ENCODE measurements at regions of chrX and their contacts with region 1.

Region 1: GRCh38 chrX:53683556-53684414 is 2.7 kb downstream of the HUWE1 start:
- DNase-seq: peak; percentile 88
- H3K4me3 Mint-ChIP-seq: peak overlapping the region; percentile 91
- H3K27ac Mint-ChIP-seq: peak overlapping the region; percentile 93
- H3K4me1 Mint-ChIP-seq: peaks cover 31% of the 10 kb centered on the region
- H3K27me3 Mint-ChIP-seq: no peaks in the 10 kb centered on the region

Region 2: DNA sequence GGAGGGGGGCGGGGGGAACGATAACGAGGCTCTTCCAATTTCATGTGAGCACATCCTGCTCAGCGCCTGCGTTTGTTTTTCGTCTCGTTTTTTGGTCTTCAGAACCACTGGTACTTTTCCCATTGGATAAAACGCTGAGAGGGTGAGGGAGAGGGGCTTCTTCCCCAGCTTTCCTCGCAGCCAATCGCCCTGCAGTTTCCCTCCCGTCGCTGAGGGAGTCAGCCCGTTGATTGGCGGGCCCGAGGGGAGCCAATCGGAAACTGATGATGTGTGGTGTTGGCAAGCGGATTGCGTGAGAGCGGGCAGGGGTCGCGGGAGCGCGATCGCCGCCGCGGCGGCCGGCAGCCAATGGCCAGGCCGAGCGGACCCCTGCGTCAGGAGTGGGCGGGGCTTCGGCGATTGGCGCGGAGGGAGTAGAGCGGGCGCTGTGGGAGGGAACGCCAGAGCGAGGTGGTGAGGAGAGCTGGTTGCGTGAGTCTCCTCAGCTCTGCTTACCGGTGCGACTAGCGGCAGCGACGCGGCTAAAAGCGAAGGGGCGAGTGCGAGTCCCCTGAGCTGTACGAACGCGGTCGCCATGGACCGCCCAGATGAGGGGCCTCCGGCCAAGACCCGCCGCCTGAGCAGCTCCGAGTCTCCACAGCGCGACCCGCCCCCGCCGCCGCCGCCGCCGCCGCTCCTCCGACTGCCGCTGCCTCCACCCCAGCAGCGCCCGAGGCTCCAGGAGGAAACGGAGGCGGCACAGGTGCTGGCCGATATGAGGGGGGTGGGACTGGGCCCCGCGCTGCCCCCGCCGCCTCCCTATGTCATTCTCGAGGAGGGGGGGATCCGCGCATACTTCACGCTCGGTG is 601.6 kb before region 1 on chrX and contains the start of gene TSPYL2:
- intact Hi-C with region 1: loop called (anchors 5 kb)
- DNase-seq: peak; percentile 89
- H3K4me3 Mint-ChIP-seq: peak within 1 kb of the TSS; percentile 94
- H3K27ac Mint-ChIP-seq: peak within 1 kb of the TSS; percentile 99
- H3K4me1 Mint-ChIP-seq: peaks cover 29% of the 10 kb centered on the region
- H3K27me3 Mint-ChIP-seq: no peaks in the 10 kb centered on the region
- total RNA-seq, gene TSPYL2: 37.5 and 40.3 TPM in 2 replicates

Region 3: DNA sequence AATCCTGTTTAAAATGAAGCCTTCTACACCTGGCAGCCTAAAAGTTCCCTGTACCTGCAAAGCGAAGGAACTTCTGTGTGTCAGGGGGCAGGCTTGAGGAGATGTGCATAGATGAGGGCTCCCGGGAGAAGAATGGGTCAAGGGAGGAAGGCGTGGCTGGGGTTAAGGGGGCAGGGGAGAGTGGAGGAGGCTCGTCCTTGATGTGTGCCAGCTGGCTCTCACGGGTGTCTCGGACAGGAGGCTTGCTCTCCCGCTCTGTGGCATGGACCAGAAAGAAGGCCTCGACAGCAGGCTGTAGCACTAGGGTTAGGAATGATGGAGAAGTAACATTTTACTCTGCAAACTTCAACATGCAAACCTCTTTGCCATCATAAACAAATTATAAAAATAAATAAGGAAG is 145.0 kb before region 1 on chrX:
- intact Hi-C with region 1: no loop called
- DNase-seq: no peak
- H3K4me3 Mint-ChIP-seq: no peak overlapping the region
- H3K27ac Mint-ChIP-seq: no peak overlapping the region
- H3K4me1 Mint-ChIP-seq: no peaks in the 10 kb centered on the region
- H3K27me3 Mint-ChIP-seq: no peaks in the 10 kb centered on the region

Region 4: GRCh38 chrX:53642337-53642736 is 41.4 kb before region 1 on chrX:
- intact Hi-C with region 1: loop called (anchors 5 kb)
- DNase-seq: no peak
- H3K4me3 Mint-ChIP-seq: no peak overlapping the region
- H3K27ac Mint-ChIP-seq: no peak overlapping the region
- H3K4me1 Mint-ChIP-seq: peaks cover 5% of the 10 kb centered on the region
- H3K27me3 Mint-ChIP-seq: no peaks in the 10 kb centered on the region

Region 5: GRCh38 chrX:53669258-53669657 is 14.5 kb before region 1 on chrX:
- intact Hi-C with region 1: no loop called
- DNase-seq: no peak
- H3K4me3 Mint-ChIP-seq: no peak overlapping the region
- H3K27ac Mint-ChIP-seq: no peak overlapping the region
- H3K4me1 Mint-ChIP-seq: peaks cover 22% of the 10 kb centered on the region
- H3K27me3 Mint-ChIP-seq: no peaks in the 10 kb centered on the region

Region 6: DNA sequence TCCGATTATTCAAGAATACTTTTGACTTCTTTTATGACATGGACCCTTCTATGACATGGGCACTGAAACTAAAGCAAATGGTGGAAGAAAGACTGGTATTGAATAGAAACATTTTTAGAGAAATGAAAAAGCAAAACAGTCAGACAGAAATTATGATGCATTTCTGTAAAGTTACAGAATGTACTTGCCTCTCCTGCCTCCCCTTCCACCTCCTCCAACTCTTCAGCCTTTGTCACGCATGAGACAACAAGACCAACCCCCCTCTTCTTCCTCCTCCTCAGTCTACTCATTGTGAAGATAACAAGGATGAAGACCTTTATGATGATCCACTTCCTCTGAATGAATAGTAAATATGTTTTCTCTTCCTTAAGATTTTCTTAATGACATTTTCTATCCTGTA is 49.0 kb after region 1 on chrX:
- intact Hi-C with region 1: loop called (anchors 1 kb)
- DNase-seq: no peak
- H3K4me3 Mint-ChIP-seq: peak overlapping the region; percentile 68
- H3K27ac Mint-ChIP-seq: peak overlapping the region; percentile 88
- H3K4me1 Mint-ChIP-seq: peaks cover 33% of the 10 kb centered on the region
- H3K27me3 Mint-ChIP-seq: no peaks in the 10 kb centered on the region

Region 7: GRCh38 chrX:53831662-53832635 is 148.2 kb after region 1 on chrX:
- intact Hi-C with region 1: loop called (anchors 2 kb)
- DNase-seq: peak; percentile 20
- H3K4me3 Mint-ChIP-seq: peak overlapping the region; percentile 35
- H3K27ac Mint-ChIP-seq: peak overlapping the region; percentile 13
- H3K4me1 Mint-ChIP-seq: peaks cover 20% of the 10 kb centered on the region
- H3K27me3 Mint-ChIP-seq: no peaks in the 10 kb centered on the region

Region 8: GRCh38 chrX:54182864-54183608 is 499.3 kb after region 1 on chrX and contains the start of gene FAM120C:
- intact Hi-C with region 1: loop called (anchors 1 kb)
- DNase-seq: peak; percentile 38
- H3K4me3 Mint-ChIP-seq: peak within 1 kb of the TSS; percentile 90
- H3K27ac Mint-ChIP-seq: peak within 1 kb of the TSS; percentile 91
- H3K4me1 Mint-ChIP-seq: peaks cover 40% of the 10 kb centered on the region
- H3K27me3 Mint-ChIP-seq: no peaks in the 10 kb centered on the region
- total RNA-seq, gene FAM120C: 10.4 and 11.8 TPM in 2 replicates

Region 9: GRCh38 chrX:54423161-54423888 is 739.5 kb after region 1 on chrX:
- intact Hi-C with region 1: no loop called
- DNase-seq: no peak
- H3K4me3 Mint-ChIP-seq: no peak overlapping the region
- H3K27ac Mint-ChIP-seq: no peak overlapping the region
- H3K4me1 Mint-ChIP-seq: no peaks in the 10 kb centered on the region
- H3K27me3 Mint-ChIP-seq: peaks cover under 1% of the 10 kb centered on the region

Region 10: DNA sequence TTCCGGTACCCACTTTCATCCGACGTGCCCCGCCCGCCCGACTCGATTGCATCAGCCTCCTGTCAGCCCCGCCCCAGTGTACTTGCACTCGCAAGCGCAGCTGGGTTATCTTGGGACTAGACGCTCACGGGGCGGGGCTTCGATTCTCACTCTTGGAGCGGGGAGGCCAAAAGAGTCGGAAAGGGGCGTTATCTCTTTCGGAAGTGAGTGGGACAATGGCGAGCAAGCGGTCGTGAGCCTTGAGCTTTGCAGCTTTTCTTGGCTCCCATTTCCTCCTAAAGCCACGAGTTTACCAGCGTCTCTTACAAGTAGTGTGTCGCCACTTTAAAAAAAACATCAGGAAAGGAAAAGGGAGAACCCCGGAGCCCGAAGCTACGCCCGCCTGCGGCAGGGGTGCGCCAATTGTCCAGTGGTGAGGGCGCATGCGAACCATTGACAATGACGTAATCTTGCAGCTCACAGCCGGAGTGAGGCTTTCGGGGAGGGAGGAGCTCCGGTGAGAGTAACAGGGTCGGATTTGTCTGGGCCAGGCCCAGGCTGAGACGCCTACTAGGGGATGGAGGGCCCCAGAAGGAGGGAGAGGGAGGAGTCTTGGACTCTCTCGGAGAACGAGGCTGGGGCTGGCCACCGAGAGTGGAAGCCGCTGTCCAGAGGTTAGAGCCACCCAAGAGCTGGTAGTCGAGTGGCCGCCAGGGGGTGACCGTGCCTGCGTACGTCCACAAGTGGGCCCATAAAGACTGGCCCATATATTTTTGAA is 955.7 kb after region 1 on chrX:
- intact Hi-C with region 1: loop called (anchors 10 kb)
- DNase-seq: peak; percentile 87
- H3K4me3 Mint-ChIP-seq: peak overlapping the region; percentile 93
- H3K27ac Mint-ChIP-seq: peak overlapping the region; percentile 99
- H3K4me1 Mint-ChIP-seq: peaks cover 10% of the 10 kb centered on the region
- H3K27me3 Mint-ChIP-seq: no peaks in the 10 kb centered on the region